Activated CD4-positive, alpha-beta T cell treated with anti-CD3 and anti-CD28 coated beads for 36 hours (primary cell): ENCODE measurements at regions of chr2 and their contacts with region 1.

Region 1: GRCh38 chr2:190679813-190680591 is 31.1 kb downstream of the NAB1 start:
- DNase-seq: peak; percentile 75
- ATAC-seq: no peak
- H3K4me3 Mint-ChIP-seq: peak overlapping the region; percentile 36
- H3K27ac Mint-ChIP-seq: peak overlapping the region; percentile 97
- H3K4me1 Mint-ChIP-seq: peaks cover 56% of the 10 kb centered on the region
- H3K27me3 Mint-ChIP-seq: no peaks in the 10 kb centered on the region

Region 2: DNA sequence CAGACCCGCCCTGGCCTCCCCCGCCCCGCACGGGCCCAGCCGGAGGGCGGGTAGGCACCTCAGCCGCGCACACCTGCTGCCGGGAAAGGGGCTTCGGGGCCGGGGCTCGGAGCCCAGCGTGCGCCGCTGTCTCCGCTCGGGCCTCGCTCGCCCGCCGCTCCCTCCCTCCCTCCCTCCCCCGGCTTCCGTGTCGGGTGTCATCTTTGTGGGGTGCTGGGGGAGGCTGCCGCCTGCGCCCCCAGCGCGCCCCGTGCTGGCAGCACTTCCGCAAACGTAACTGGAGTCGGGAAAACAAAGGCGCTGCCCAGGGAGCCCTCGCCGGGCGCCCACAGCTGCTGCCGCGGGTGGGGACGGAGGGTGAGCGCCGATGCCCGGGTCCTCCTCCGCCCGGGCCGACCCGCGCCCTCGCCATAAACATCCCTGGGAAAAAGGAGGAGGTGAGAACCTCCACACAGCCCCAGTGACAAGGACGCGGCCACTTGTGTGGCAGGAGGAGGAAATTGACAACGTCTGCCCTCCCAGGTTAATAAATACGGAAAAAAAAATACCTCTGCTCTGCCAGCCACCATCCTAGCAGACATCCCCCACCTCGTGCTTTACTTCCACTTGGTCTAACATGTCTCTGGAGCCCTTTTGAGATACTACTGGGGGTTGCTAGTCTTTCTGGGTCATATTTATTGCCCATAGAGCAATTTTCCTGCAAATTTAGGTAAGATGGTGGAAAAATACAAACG is 271.3 kb before region 1 on chr2:
- CTCF ChIA-PET with region 1: interaction called, 4 read pairs
- POLR2A ChIA-PET with region 1: interaction called, 3 read pairs
- intact Hi-C with region 1: loop called (anchors 1 kb)
- DNase-seq: peak; percentile 82
- ATAC-seq: peak; percentile 50
- H3K4me3 Mint-ChIP-seq: peak overlapping the region; percentile 81
- H3K27ac Mint-ChIP-seq: peak overlapping the region; percentile 90
- H3K4me1 Mint-ChIP-seq: peaks cover 45% of the 10 kb centered on the region
- H3K27me3 Mint-ChIP-seq: no peaks in the 10 kb centered on the region

Region 3: GRCh38 chr2:190636373-190636772 is 43.6 kb before region 1 on chr2:
- CTCF ChIA-PET with region 1: interaction called, 20 read pairs
- POLR2A ChIA-PET with region 1: no interaction called
- intact Hi-C with region 1: no loop called
- DNase-seq: no peak
- ATAC-seq: no peak
- H3K4me3 Mint-ChIP-seq: no peak overlapping the region
- H3K27ac Mint-ChIP-seq: no peak overlapping the region
- H3K4me1 Mint-ChIP-seq: peaks cover 11% of the 10 kb centered on the region
- H3K27me3 Mint-ChIP-seq: no peaks in the 10 kb centered on the region

Region 4: DNA sequence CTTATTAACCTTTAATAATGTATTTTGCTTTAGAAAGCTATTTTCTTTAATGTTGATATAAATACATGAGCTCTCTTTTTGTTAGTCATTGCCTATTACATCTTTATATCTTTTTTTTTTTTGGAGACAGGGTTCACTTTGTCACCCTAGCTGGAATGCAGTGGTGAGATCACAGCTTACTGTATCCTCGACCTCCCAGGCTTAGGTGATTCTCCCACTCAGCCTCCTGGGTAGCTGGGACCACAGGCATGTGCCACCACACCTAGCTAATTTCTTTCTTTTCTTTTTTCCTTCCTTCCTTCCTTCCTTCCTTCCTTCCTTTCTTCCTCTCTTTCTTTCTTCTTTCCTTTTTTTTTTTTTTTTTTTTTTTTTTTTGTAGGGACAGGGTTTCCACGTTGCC is 15.8 kb before region 1 on chr2:
- CTCF ChIA-PET with region 1: interaction called, 15 read pairs
- POLR2A ChIA-PET with region 1: interaction called, 4 read pairs
- intact Hi-C with region 1: no loop called
- DNase-seq: no peak
- ATAC-seq: peak; percentile 25
- H3K4me3 Mint-ChIP-seq: no peak overlapping the region
- H3K27ac Mint-ChIP-seq: no peak overlapping the region
- H3K4me1 Mint-ChIP-seq: peaks cover 60% of the 10 kb centered on the region
- H3K27me3 Mint-ChIP-seq: no peaks in the 10 kb centered on the region

Region 5: GRCh38 chr2:190701586-190701985 is 21.6 kb after region 1 on chr2:
- CTCF ChIA-PET with region 1: interaction called, 15 read pairs
- POLR2A ChIA-PET with region 1: interaction called, 3 read pairs
- intact Hi-C with region 1: no loop called
- DNase-seq: no peak
- ATAC-seq: peak; percentile 78
- H3K4me3 Mint-ChIP-seq: no peak overlapping the region
- H3K27ac Mint-ChIP-seq: no peak overlapping the region
- H3K4me1 Mint-ChIP-seq: peaks cover 10% of the 10 kb centered on the region
- H3K27me3 Mint-ChIP-seq: no peaks in the 10 kb centered on the region

Region 6: DNA sequence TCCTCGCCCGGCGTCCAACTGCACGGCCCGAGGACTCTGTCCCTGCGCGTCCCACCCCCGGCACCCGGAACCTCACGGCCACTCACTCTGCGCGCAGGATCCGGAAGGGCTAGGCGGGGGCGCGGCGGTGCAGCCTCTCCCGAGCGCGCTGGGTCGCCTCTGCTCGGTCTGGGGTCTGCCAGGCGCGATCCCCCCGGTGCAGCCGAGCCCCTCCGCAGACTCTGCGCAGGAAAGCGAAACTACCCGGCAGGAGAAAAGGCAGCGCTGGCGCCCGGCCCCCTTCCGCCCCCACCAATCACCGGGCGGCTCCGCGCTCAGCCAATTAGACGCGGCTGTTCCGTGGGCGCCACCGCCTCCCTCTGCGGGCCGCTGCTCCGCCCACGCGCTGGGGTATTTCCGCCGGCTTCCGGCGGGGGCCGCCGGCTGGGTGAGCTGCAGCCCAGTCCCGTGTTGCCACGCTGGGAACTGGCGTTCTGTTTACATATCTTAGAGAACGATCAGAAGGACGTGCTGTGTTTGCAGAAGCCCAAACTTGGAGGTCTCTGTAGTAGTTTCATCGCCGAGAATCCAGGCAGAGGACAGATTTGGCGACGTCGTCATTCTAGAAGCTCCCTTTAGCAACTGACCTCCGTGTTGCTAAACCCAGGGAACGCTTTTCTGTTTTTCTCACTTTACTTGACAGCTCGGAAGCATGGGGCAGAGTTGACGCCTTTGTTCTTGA is 334.1 kb after region 1 on chr2 and contains the start of gene STAT1:
- CTCF ChIA-PET with region 1: no interaction called
- POLR2A ChIA-PET with region 1: no interaction called
- intact Hi-C with region 1: loop called in 1 of 2 experiments (anchors 2 kb)
- DNase-seq: peak; percentile 98
- ATAC-seq: peak; percentile 79
- H3K4me3 Mint-ChIP-seq: no peak within 1 kb of the TSS
- H3K27ac Mint-ChIP-seq: no peak within 1 kb of the TSS
- H3K4me1 Mint-ChIP-seq: peaks cover 41% of the 10 kb centered on the region
- H3K27me3 Mint-ChIP-seq: no peaks in the 10 kb centered on the region
- total RNA-seq, gene STAT1: 317 to 343 TPM